ENCODE measurements at regions of chr19 and their contacts with region 1.

Region 1: DNA sequence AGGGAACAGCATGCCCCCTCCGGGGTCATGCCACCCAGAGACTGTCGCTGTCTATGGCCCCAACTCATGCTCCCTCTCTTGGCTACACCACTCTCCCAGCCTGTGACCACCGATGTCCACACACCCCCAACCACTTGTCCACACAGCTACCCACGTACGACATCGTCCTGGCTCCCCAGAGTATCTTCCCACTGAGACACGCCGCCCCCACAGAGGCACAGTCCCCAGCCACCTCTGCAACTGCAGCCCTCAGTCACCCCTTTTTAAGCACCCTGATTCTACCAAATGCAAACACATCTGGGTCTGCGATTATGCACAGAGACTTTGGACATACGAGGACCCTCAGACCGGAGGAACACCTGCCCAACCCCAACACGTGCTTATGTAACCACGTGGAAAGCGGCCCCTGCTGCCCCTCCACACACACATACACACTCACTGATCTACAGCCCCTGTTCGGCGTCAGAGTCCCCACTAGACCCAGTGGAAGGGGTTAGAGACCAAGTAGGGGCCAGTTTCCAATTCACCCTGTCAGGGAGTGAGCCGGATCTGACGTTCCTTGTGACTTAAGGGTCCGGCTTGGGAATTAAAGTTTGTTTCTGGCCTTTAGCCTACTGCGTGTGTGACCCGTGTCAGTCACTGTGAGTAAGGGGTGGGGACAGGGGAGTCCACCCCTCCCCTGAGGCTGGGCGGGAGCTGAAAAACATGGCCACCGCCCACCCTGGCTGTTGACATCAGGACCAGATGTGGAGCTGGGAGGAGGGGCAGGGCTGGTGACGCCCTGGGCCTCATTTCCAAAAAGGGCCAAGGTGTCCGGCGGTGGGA is 11.9 kb upstream of the AXL start:
- DNase-seq: no peak

Region 2: DNA sequence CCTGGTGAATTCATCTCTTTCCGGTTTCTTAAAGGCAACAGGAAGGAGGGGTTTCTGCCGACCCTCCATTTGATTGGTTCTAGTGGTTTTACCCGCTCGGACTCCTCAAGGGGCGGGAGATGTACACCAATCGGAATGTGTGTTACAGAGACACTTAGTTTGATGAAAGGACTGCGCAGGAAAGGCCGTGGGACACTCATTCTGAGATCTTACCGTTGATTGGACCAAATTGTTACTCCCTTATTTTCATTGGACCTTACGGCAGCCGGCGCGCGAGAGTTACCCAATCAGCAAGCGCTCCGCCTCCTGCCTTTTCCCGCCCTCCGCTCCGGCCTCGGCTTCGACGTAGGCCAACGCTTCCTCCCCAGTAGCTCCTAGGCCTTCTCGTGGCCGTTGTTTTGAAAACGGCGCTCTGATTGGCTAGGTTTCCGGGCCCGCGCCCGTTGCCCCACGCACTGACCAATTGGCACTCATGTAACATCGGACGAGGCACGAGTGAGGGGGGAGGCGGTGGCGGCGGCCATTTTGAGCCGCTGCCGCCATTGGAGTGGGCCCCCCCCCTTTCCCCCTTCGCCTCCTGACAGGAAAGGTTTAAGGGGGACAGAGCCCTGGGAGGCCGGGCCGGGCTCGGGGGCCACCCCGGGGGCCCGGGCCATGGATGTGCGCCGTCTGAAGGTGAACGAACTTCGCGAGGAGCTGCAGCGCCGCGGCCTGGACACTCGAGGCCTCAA is 56.9 kb after region 1 on chr19 and contains the start of gene HNRNPUL1:
- intact Hi-C with region 1: loop called (anchors 1 kb)
- DNase-seq: peak; percentile 97 to 100 (median 98)

Measured in posterior cingulate gyrus (tissue), 11 donors.